ENCODE measurements at regions of chr4 and their contacts with region 1.

Region 1: DNA sequence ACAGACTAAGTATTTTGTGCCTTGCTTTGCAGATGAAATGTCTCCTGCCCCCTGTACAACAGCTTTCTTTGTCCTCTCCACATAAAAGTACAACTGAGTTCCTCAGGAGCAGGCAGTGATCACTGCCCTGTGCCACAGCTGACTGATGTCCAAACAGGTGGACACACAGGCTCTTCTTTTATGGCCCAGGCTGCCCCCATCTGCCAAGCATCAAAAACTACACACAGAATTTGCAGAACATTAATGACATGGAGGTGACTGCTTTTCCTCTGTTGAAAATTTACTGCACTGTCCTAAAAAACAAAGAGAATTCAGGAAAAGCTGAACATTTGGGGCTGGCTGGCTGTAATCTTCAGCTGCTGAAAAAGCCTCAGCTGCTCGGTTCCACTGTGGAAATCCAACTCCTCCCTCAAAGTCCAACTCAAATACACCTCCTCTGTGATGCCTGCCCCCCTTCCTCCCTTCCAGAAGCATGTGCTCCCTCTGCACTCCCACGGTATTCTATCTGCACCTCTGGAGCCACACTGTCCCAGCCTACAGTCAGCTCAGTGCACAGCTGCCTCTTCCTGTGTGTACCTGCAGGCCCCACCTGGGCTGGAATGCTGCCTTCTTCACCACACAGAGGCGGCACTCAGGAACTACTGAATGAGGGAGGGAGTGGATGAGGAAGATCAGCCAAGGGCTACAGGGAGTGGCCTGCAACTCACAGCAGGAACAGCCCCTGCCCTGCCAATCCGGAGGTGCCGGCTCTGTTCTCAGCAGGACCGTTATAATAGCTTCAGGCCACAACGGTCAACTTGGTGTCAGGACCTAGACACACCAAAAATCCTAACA is 10.3 kb downstream of the AFAP1 start:
- DNase-seq: peak; percentile 35
- ATAC-seq: peak; percentile 94
- H3K4me3 Mint-ChIP-seq: no peak overlapping the region
- H3K27ac Mint-ChIP-seq: peak overlapping the region; percentile 83
- H3K4me1 Mint-ChIP-seq: peaks cover 26% of the 10 kb centered on the region
- H3K27me3 Mint-ChIP-seq: no peaks in the 10 kb centered on the region
- CTCF ChIP-seq: no peak

Region 2: GRCh38 chr4:7876201-7876875 is 53.0 kb before region 1 on chr4:
- CTCF ChIA-PET with region 1: interaction called, 10 read pairs
- POLR2A ChIA-PET with region 1: no interaction called
- DNase-seq: peak; percentile 54
- ATAC-seq: peak; percentile 98
- H3K4me3 Mint-ChIP-seq: no peak overlapping the region
- H3K27ac Mint-ChIP-seq: peak overlapping the region; percentile 6; the same call in 1 of the 2 replicates
- H3K4me1 Mint-ChIP-seq: peaks cover 54% of the 10 kb centered on the region
- H3K27me3 Mint-ChIP-seq: no peaks in the 10 kb centered on the region
- CTCF ChIP-seq: no peak

Region 3: GRCh38 chr4:7939377-7940108 is 10.2 kb after region 1 on chr4 and contains the start of gene AFAP1:
- CTCF ChIA-PET with region 1: interaction called, 11 read pairs
- POLR2A ChIA-PET with region 1: interaction called, 4 read pairs
- DNase-seq: peak; percentile 94
- ATAC-seq: peak; percentile 91
- H3K4me3 Mint-ChIP-seq: peak within 1 kb of the TSS; percentile 77
- H3K27ac Mint-ChIP-seq: no peak within 1 kb of the TSS
- H3K4me1 Mint-ChIP-seq: peaks cover 47% of the 10 kb centered on the region
- H3K27me3 Mint-ChIP-seq: peaks cover 5% of the 10 kb centered on the region
- CTCF ChIP-seq: no peak
- total RNA-seq, gene AFAP1: 17.6 to 23.6 TPM (median 18.0 TPM) in 3 replicates

Region 4: GRCh38 chr4:8675383-8675782 is 746.0 kb after region 1 on chr4:
- CTCF ChIA-PET with region 1: no interaction called
- POLR2A ChIA-PET with region 1: no interaction called
- DNase-seq: peak; percentile 89
- ATAC-seq: peak; percentile 99
- H3K4me3 Mint-ChIP-seq: no peak overlapping the region
- H3K27ac Mint-ChIP-seq: no peak overlapping the region
- H3K4me1 Mint-ChIP-seq: no peaks in the 10 kb centered on the region
- H3K27me3 Mint-ChIP-seq: peaks cover 14% of the 10 kb centered on the region
- CTCF ChIP-seq: no peak